ENCODE measurements at regions of chr11 and their contacts with region 1.

Region 1: DNA sequence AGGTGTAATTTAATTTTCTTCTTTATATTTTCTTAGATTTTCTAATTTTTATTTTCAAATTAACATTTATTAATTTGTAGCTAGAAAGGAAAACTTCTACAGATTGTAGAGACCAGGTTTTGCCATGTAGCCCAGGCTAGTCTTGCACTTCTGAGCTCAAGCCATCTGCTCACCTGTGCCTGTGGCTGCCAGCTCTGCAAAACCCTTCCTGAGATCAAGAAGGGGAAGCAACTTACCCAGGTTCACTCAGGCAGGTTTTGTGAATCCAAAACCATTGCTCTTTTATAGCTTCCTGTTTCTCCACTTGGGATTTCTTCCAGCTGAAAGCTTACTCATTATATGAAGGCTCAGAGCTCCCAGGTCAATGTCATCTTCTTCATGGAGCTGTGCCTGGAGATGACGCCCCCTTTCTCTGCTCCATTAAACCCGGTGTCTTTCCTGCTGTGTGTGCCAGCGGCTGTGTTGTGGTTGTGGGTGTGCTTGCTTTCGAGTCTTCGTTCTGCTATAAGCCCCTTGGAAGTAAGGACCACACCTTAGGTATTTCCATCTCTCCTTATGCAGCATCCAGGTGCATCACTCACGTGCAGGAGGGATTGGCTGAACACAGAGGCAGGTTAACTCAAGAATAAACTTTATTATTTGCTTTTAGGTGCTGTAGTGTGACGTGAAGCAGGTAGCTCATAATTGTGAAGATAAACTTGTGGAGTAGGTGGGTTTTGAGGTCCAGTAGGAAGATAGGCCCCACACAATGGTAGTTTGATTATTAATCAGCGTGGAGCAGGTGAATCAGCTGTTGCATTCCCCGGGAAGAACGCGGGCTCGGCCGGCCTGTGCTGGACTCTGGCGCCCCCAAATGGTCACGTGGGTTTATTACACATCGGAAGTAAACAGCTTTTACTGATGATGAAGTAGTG is 42.2 kb upstream of the INCENP start:
- ATAC-seq: peak; percentile 84 to 93 (median 87)
- H3K4me3 ChIP-seq: no peak overlapping the region
- H3K27ac ChIP-seq: no peak overlapping the region
- H3K4me1 ChIP-seq: peaks cover 4 to 6% of the 10 kb centered on the region in 2 donors

Region 2: DNA sequence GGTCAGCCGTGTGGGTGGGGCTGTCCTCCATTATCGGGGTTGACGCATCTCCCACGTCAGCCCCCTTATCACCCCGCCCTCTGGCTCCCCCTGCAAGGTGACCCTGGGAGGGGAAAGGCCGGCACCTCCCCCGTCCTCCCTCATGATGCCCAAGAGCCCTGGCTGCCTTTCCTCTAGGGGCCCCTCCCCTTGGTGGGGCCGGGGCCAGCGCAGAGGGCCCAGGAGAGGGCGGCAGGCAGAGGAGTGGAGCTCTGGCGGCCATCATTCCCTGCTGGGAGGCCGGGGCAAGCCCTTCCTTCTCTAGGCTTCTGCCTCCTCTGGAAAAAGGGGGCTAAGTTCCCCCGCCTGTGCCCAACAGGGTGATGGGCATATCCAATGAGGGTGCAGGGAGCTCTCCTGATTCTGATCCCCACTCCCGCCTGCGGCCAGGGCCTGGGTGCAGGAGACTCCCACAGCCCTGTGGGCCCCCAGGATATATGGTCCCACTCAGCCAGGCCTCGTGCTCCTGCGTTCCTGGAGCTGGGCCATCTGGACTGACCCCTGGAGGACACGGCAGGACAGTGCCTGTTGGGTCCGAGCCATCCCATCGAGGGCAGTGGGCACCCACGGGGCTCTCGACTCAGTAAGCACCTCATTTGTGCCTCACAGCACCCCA is 316.9 kb before region 1 on chr11:
- in situ Hi-C with region 1: no loop called
- ATAC-seq: peak in 3 of 8 experiments; percentile 11 to 34 (median 21)
- H3K4me3 ChIP-seq: no peak overlapping the region
- H3K27ac ChIP-seq: peak overlapping the region in 1 of 2 donors; percentile 18
- H3K4me1 ChIP-seq: peaks cover 18 to 45% of the 10 kb centered on the region in 2 donors

Region 3: DNA sequence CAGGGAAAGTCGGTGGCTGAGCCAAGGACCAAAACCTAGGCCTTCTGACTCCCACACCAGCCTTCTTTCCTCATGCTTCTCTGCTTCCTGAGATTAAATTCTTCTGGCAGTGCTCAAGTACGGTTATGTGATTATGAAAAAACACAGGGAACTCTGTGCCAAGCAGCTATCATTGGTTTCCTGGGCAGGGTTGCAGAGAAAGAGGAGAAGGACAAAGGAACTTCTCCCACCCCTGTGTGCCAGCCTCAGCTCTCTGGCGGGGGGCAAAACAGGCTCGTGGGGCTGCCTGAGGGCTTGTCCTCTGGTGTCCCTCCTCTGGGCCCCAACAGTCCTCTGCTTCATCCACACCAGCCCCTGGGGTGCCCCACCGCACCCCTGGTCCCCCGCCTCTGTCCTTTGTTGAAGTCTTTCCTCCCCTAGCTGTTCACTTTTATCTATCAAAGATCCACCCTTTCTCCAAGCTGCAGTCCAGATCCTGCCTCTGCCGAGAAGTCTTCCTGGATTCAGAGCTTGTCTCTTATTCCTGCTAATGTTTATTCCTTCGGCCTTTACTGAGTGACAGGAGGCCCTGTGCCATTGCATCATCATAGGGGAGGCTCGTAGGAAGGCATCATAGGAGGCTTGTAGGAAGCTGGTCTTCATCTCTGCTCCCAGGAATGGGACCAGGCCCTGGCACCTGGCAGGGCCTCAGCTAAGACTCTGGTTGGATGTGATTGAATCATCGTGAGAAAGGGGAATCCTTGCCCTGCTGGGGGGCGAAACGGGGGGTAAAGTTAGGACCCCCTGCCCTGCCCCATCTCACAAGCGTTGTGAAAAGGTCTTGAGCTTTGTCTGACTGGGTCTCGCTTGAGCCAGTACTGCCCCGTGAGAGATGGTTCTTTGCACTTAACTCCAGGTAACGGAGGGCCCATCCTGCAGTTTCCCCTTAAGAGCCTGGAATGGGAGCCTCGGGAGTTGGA is 102.7 kb before region 1 on chr11:
- in situ Hi-C with region 1: loop called in 1 of 9 experiments (anchors 25 kb)
- ATAC-seq: peak in 1 of 8 experiments; percentile 18
- H3K4me3 ChIP-seq: no peak overlapping the region
- H3K27ac ChIP-seq: no peak overlapping the region
- H3K4me1 ChIP-seq: no peaks in the 10 kb centered on the region